ENCODE measurements at regions of chr14 and their contacts with region 1.

Region 1: GRCh38 chr14:65637780-65638179 is 225.2 kb downstream of the FUT8 start:
- DNase-seq: no peak
- H3K4me3 ChIP-seq: no peak overlapping the region
- H3K27ac ChIP-seq: no peak overlapping the region
- H3K4me1 ChIP-seq: no peaks in the 10 kb centered on the region; the same call in 1 of the 2 replicates
- H3K27me3 ChIP-seq: no peaks in the 10 kb centered on the region
- CTCF ChIP-seq: no peak

Region 2: GRCh38 chr14:65824285-65824977 is 186.7 kb after region 1 on chr14:
- CTCF ChIA-PET with region 1: interaction called, 10 read pairs
- POLR2A ChIA-PET with region 1: no interaction called
- intact Hi-C with region 1: no loop called
- DNase-seq: peak; percentile 46 to 48
- H3K4me3 ChIP-seq: no peak overlapping the region
- H3K27ac ChIP-seq: no peak overlapping the region
- H3K4me1 ChIP-seq: no peaks in the 10 kb centered on the region
- H3K27me3 ChIP-seq: no peaks in the 10 kb centered on the region
- CTCF ChIP-seq: peak; percentile 92

Measured in PC-9 (cell line).